ENCODE measurements at regions of chr12 and their contacts with region 1.

Region 1: DNA sequence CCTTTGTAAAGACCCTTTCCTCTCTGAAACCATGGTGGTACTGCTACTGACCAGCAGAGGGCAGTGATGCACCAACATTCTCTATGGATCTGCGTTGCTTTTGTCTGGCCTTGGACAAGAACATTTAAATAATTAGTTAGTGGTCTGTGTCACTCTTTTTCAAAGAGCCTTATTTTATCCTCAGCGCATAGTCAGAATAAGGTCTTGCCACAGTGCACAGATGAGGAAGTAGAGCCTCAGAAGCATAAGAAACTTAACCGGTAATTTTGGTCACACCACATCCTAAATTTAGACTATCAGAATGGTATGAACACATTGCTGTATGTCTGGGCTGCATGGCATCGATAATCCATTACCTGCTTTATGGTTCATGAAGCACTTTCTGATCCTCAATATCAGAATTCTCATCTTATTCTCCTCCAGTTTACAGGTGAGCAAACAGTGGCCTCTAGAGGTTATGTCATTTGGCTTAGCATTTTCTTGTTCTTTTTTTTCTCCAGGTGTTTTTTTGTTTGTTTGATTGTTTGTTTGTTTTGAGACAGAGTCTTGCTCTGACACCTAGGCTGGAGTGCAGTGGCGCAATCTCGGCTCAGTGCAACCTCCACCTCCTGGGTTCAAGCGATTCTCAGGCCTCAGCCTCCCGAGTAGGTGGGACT is 23.7 kb upstream of the IFT81 start:
- DNase-seq: peak; percentile 80

Region 2: GRCh38 chr12:110224379-110225304 is 124.2 kb after region 1 on chr12:
- intact Hi-C with region 1: loop called in 1 of 2 experiments (anchors 10 kb)
- DNase-seq: no peak

Region 3: DNA sequence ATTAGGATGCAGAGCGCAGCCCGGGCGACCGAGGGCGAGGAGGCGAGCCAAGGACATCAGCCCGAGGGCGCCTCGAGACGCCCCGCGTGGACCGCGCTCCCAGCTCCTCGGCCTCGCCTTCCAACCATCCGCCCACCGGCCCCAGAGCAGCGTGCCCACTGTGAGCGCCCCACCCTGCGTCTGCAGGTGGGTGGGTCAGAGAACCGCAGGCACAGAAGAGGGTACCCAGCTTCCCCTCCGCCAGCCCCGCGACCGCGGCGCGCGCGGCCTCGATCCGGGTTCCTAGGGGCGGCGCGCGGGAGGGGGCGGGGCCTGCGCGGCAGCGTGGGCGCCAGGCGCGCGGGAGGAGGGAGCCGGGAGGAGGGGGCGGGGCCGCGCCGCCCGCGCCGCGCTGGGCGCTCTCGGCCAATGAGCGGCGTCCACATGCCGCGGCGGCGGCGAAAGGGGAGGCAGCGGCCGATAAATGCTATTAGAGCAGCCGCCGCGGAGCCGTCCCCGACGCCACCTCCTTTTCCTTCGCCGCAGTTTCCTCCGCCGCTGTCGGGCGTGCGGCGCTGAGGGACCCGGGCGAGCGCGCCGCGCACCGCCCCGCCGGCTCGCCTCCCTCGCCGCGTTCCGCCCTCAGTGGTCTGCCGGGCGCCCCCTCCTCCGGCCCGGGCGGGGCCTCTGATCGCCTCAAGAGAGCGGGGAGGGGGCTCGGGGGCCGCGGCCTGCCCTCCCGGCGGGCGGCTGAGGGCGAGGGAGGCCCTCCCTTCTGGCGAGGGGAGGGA is 180.5 kb after region 1 on chr12 and contains the start of gene ATP2A2:
- intact Hi-C with region 1: loop called in 1 of 2 experiments (anchors 10 kb)
- DNase-seq: peak; percentile 97
- total RNA-seq, gene ATP2A2: 222 to 263 TPM

Region 4: DNA sequence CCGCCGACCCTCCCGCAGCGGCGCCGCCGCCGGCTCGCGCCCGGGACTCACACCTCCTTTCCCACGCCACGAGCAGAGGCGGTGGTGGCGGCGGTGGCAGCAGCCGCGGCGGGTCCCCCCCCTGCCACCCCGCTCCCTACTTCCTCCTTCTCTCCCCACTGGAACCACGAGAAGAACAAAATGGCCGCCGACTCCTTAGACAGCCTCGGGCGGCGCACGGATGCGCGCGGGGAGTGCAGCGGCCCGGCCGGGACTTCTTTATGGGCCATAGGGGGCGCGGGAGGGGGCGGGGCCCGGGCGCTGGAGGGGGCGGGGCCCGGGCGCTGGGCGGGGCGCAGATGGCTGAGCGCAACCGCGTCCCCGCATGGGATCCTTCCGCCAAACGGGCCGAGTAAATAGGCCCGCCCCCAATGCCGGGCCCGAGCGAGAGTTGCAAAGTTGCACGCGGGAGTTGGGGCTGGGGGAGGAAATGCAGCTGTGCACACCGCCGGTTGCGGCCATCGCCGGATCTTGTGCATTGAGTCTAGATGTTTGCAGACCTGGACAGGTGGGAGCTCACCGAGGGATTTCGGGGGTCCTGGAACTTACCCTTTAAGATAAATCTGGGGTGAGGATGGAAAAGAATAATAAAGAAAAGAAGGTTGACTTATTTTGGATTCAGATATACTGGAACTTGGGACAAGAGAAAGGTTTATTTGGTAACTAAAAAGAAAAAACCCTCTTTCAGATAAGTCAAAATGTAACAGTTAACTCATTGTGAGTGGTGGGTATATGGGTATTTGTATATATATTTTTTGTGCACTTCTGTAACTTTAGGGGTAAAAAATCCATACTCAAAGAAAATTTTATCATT is 642.5 kb after region 1 on chr12 and contains the start of gene PPP1CC:
- intact Hi-C with region 1: no loop called
- DNase-seq: peak; percentile 98
- total RNA-seq, gene PPP1CC: 91.0 to 98.0 TPM